ENCODE measurements at regions of chr17 and their contacts with region 1.

Region 1: GRCh38 chr17:66255112-66255511 is 25.9 kb upstream of the APOH start:
- DNase-seq: no peak

Region 2: GRCh38 chr17:66481271-66481670 is 226.2 kb after region 1 on chr17:
- intact Hi-C with region 1: no loop called
- DNase-seq: no peak

Region 3: DNA sequence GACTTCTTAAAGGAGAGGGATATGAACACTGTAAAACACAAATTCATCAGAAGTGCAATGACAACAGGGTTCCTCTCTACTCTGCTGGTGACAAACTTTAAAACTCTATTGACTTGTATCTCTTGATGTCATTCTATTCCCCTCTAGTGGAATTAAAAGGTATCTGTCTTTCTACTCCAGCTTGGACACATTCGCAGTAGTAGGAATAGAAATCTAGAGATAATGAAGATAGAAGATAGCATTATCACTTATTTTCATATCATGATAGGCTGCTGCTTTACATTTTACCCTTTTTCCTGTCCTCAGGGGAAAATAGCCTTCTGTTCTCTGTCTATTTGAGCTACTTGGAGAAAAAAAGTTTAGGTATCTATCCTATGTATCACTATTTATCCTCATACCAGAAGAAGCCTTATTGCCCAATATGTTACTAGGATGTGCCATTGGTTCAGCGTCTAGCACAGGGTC is 370.2 kb after region 1 on chr17:
- intact Hi-C with region 1: loop called in 1 of 2 experiments (anchors 5 kb)
- DNase-seq: no peak

Region 4: DNA sequence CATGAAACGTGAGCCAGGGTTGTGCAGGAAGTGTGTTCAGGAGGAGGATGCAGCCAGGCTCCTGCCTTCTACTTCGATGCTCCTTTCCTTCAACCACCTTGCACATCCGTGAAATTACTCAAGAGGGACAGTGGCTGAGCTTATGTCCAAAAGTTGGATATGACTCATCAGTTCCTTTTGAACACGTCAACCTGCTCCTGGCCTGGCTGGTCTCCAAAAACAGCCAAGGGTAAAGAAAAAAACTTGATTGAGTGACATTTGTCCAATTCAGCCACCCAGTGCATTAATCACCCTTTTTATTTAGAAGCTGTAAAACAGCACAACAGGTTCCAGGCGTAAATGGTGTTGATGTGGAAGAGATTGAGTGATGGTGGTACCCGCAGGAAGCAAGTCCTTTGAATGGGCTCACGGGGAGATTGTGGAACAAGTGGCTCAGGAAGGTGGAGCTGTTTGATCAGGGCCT is 406.3 kb after region 1 on chr17:
- intact Hi-C with region 1: loop called in 1 of 2 experiments (anchors 10 kb)
- DNase-seq: no peak

Region 5: DNA sequence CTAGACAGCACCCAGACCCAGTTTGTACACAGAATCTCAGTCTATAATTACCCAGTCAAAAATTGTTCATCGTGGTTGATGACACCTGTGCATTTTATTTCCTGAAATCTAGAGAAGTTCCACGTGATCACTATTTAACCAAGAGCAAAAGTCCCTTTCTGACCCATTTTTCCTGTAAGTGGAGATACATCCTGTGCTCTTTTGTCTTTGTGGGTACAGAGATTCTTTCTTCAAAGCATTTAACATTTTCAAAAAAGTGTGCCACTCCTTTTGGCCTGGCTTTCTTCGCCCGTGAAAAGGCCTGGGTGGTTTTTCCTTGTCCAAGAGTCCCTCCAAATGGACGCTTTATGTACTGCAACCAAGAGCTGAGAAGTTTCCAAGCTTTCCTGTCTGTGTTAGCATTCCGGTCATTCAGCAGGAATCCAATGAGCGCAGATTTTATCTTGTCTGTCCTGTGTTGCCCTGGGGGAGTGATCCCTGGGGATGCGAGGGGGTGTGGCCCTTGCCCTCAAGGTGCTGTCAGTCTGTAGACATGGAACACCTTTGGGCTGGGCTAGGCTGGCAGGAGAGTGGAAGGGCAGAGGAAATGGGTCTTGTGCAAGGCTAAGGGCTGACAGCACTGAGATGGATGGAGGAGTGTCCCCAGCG is 418.7 kb after region 1 on chr17:
- intact Hi-C with region 1: loop called (anchors 5 to 10 kb)
- DNase-seq: no peak

Measured in posterior vena cava (tissue), 2 donors.